Posterior vena cava (tissue), 2 donors: ENCODE measurements at regions of chr13 and their contacts with region 1.

Region 1: GRCh38 chr13:110812121-110812868 is 98.8 kb downstream of the ING1 start:
- DNase-seq: peak; percentile 72

Region 2: GRCh38 chr13:109131698-109132257 is 1680.5 kb before region 1 on chr13:
- intact Hi-C with region 1: loop called in 1 of 2 experiments (anchors 5 kb)
- DNase-seq: no peak